ENCODE measurements at regions of chr1 and their contacts with region 1.

Region 1: GRCh38 chr1:32997381-32997891 is 32.8 kb upstream of the RNF19B start:
- DNase-seq: no peak
- H3K4me3 ChIP-seq: no peak overlapping the region
- H3K27ac ChIP-seq: no peak overlapping the region
- H3K4me1 ChIP-seq: no peaks in the 10 kb centered on the region
- H3K27me3 ChIP-seq: no peaks in the 10 kb centered on the region
- CTCF ChIP-seq: no peak

Region 2: GRCh38 chr1:33025761-33026160 is 28.3 kb after region 1 on chr1:
- CTCF ChIA-PET with region 1: no interaction called
- POLR2A ChIA-PET with region 1: interaction called, 17 read pairs
- intact Hi-C with region 1: no loop called
- DNase-seq: peak; percentile 68
- H3K4me3 ChIP-seq: no peak overlapping the region
- H3K27ac ChIP-seq: no peak overlapping the region
- H3K4me1 ChIP-seq: peaks cover 38% of the 10 kb centered on the region
- H3K27me3 ChIP-seq: no peaks in the 10 kb centered on the region
- CTCF ChIP-seq: no peak

Measured in A673 (cell line).